Motor neuron (in vitro differentiated cells): ENCODE measurements at regions of chr17 and their contacts with region 1.

Region 1: GRCh38 chr17:10327640-10328039 is 45.2 kb downstream of the MYH13 start:
- ATAC-seq: peak in 6 of 8 experiments; percentile 49 to 92 (median 70)
- H3K4me3 ChIP-seq: no peak overlapping the region
- H3K27ac ChIP-seq: no peak overlapping the region
- H3K4me1 ChIP-seq: no peaks in the 10 kb centered on the region

Region 2: GRCh38 chr17:10292057-10292937 is 35.3 kb before region 1 on chr17:
- in situ Hi-C with region 1: no loop called
- ATAC-seq: peak in 2 of 8 experiments; percentile 39 to 69
- H3K4me3 ChIP-seq: no peak overlapping the region
- H3K27ac ChIP-seq: no peak overlapping the region
- H3K4me1 ChIP-seq: no peaks in the 10 kb centered on the region

Region 3: DNA sequence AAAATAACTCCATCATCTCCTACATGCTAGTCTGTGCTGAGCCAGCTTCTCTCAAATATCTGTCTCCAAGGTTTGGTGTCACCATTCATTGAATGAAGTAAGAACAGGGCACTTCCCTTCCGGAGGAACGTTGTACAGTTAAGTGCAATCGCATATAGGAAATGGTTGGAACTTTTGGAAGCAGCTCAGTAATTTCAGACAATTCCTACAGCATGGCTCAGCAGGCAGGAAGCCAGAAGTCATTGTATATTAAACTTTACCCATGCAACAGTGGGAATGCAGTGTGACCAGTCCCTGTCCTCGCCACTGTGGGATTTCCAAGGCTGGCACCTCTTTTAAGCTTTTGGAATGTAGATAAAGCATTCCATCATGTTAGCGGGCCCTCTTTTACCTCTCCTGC is 272.9 kb after region 1 on chr17:
- in situ Hi-C with region 1: loop called in 5 of 9 experiments (anchors 10 to 25 kb)
- ATAC-seq: no peak
- H3K4me3 ChIP-seq: no peak overlapping the region
- H3K27ac ChIP-seq: no peak overlapping the region
- H3K4me1 ChIP-seq: peaks cover 3 to 8% of the 10 kb centered on the region in 2 donors